Naive thymus-derived CD4-positive, alpha-beta T cell (primary cell): ENCODE measurements at regions of chr14 and their contacts with region 1.

Region 1: GRCh38 chr14:22918804-22919600 is at the start of gene RBM23:
- DNase-seq: peak; percentile 98 to 100 (median 100)
- ATAC-seq: peak; percentile 92
- H3K4me3 ChIP-seq: peak within 1 kb of the TSS; percentile 96
- H3K4me3 Mint-ChIP-seq: peak within 1 kb of the TSS; percentile 93 to 100 (median 97)
- H3K27ac ChIP-seq: peak within 1 kb of the TSS; percentile 98
- H3K27ac Mint-ChIP-seq: peak within 1 kb of the TSS; percentile 100
- H3K4me1 ChIP-seq: peaks cover 0 to 19% of the 10 kb centered on the region in 2 donors
- H3K4me1 Mint-ChIP-seq: peaks cover 18 to 56% (median 49%) of the 10 kb centered on the region in 7 donors
- H3K27me3 ChIP-seq: no peaks in the 10 kb centered on the region
- H3K27me3 Mint-ChIP-seq: peaks cover 0 to 4% (median 0%) of the 10 kb centered on the region in 5 donors
- total RNA-seq, gene RBM23: 91.9 to 140 (median 99.1) TPM

Region 2: DNA sequence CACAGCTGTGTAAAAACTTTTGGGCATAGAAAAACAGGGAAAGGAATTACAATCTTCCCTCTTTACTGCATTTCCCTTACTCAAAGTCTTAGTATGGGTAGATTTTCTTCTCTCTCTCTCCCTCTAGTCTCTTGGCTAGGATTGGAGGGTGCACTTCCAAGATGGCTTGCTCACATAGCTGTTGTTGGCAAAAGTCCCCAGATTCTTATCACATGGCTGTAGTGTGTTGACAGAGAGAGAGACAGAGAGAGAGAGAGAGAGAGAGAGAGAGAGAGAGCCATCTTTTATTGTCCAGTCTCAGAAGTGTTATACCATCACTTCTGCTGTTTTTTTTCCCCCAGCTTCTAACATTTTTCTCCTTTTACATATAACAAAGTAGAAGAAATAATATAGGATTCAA is 1271.6 kb before region 1 on chr14:
- CTCF ChIA-PET with region 1: no interaction called
- POLR2A ChIA-PET with region 1: no interaction called
- intact Hi-C with region 1: no loop called
- DNase-seq: no peak
- ATAC-seq: no peak
- H3K4me3 ChIP-seq: no peak overlapping the region
- H3K4me3 Mint-ChIP-seq: no peak overlapping the region
- H3K27ac ChIP-seq: no peak overlapping the region
- H3K27ac Mint-ChIP-seq: no peak overlapping the region
- H3K4me1 ChIP-seq: no peaks in the 10 kb centered on the region
- H3K4me1 Mint-ChIP-seq: peaks cover 0 to 4% (median 0%) of the 10 kb centered on the region in 7 donors
- H3K27me3 ChIP-seq: no peaks in the 10 kb centered on the region
- H3K27me3 Mint-ChIP-seq: peaks cover 8 to 30% (median 23%) of the 10 kb centered on the region in 5 donors

Region 3: DNA sequence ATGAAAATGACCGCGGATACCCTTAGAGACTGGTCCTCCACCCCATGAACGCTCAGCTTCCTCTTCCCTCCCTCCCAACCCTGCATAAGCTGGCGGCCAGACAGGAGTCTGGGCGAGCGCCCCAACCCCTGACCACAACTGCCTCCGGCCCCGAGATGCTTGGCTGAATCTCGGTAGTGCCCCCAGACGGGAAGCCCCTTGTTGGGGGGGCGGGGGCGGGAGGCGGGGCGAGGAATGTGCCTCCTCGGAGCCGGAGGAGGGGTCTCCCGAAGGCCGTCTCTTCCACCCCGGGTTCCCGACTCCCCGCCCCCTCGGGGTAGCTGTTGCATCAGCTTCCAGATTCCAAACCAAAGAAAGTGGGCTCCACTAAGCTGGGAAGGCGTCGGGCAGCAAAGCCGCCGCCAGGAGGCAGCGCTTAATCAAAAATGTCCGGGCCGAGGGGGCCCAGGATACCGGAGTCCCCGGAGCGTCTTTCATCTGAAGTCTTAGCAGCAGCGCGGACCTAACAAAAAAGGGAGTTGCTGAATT is 96.4 kb before region 1 on chr14:
- CTCF ChIA-PET with region 1: interaction called, 27 read pairs
- POLR2A ChIA-PET with region 1: no interaction called
- intact Hi-C with region 1: no loop called
- DNase-seq: peak; percentile 50 to 71 (median 65)
- ATAC-seq: peak; percentile 83
- H3K4me3 ChIP-seq: peak overlapping the region; percentile 38
- H3K4me3 Mint-ChIP-seq: peak overlapping the region; percentile 47 to 78 (median 66)
- H3K27ac ChIP-seq: no peak overlapping the region
- H3K27ac Mint-ChIP-seq: peak overlapping the region in 3 of 9 donors; percentile 11 to 36 (median 22)
- H3K4me1 ChIP-seq: peaks cover 0 to 17% of the 10 kb centered on the region in 2 donors
- H3K4me1 Mint-ChIP-seq: peaks cover 6 to 37% (median 24%) of the 10 kb centered on the region in 7 donors
- H3K27me3 ChIP-seq: no peaks in the 10 kb centered on the region
- H3K27me3 Mint-ChIP-seq: peaks cover 0 to 16% (median 4%) of the 10 kb centered on the region in 5 donors

Region 4: DNA sequence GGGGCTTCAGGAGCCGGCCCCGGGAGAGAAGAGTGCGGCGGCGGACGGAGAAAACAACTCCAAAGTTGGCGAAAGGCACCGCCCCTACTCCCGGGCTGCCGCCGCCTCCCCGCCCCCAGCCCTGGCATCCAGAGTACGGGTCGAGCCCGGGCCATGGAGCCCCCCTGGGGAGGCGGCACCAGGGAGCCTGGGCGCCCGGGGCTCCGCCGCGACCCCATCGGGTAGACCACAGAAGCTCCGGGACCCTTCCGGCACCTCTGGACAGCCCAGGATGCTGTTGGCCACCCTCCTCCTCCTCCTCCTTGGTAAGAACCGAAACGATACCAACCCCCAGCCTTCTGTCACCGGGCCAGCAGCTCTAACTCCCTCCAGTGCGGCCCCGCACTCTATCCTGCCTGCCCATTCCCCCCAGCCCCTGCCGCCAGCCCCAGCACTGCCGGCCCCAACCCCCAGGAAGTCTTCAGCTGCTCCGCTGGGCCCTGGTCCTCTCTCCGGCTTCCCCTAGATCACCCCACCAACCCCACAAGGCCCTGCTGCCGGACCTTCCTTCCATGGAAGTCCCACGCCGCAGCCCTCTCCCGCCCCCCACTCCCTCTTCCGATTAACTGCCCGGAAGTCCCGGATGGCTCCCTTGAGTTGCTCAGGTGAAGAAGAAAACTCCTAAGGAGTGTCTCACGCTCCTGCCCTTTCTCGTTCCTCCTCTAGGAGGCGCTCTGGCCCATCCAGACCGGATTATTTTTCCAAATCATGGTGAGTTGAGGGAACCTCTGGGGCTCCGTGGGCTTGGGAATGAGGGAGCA is 46.8 kb before region 1 on chr14:
- CTCF ChIA-PET with region 1: interaction called, 4 read pairs
- POLR2A ChIA-PET with region 1: interaction called, 29 read pairs
- intact Hi-C with region 1: loop called (anchors 1 kb)
- DNase-seq: peak; percentile 55 to 76 (median 69)
- ATAC-seq: peak; percentile 57
- H3K4me3 ChIP-seq: peak overlapping the region; percentile 72
- H3K4me3 Mint-ChIP-seq: peak overlapping the region; percentile 87 to 98 (median 95)
- H3K27ac ChIP-seq: peak overlapping the region; percentile 86
- H3K27ac Mint-ChIP-seq: peak overlapping the region; percentile 83 to 98 (median 94)
- H3K4me1 ChIP-seq: peaks cover 20 to 33% of the 10 kb centered on the region in 2 donors
- H3K4me1 Mint-ChIP-seq: peaks cover 26 to 49% (median 29%) of the 10 kb centered on the region in 7 donors
- H3K27me3 ChIP-seq: no peaks in the 10 kb centered on the region
- H3K27me3 Mint-ChIP-seq: no peaks in the 10 kb centered on the region

Region 5: DNA sequence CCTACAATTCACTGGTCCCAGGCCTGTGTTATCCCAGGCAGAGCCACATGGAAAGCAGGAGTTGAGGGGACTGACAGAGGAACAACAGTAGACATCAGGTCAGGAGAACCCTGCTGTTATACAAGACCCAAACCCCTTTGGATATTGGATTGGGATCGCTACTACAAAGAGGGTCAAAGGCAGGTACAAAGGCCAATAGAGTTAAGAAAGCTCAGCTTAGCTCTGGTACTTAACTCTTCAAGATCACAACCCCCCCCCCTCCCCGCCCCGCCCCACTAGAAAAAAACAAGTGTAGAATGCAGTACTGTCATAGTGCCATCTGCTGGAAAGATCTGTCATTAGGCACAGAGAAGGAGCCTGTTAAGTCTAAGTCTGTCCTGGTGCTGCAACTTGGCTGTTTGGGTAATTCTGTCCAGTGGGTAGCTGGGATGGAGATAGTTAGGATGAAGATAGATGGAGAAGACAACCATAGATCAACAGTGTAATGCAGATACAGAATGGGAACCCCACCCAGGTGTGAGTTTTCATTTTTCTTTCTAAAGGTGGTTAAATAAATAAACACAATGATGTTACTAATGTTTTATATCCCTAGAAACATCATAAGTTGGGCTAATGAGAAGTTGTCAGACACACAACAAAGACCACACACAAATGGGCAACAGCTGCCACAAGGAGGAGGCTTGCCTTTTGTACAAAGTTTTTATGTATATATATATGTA is 18.8 kb before region 1 on chr14:
- CTCF ChIA-PET with region 1: interaction called, 8 read pairs
- POLR2A ChIA-PET with region 1: interaction called, 6 read pairs
- intact Hi-C with region 1: loop called in 1 of 2 experiments (anchors 1 kb)
- DNase-seq: peak in 7 of 9 donors; percentile 41 to 72 (median 66)
- ATAC-seq: peak; percentile 94
- H3K4me3 ChIP-seq: no peak overlapping the region
- H3K4me3 Mint-ChIP-seq: no peak overlapping the region
- H3K27ac ChIP-seq: peak overlapping the region; percentile 15
- H3K27ac Mint-ChIP-seq: peak overlapping the region in 8 of 9 donors; percentile 0 to 58 (median 35)
- H3K4me1 ChIP-seq: peaks cover 0 to 4% of the 10 kb centered on the region in 2 donors
- H3K4me1 Mint-ChIP-seq: peaks cover 10 to 24% (median 15%) of the 10 kb centered on the region in 7 donors
- H3K27me3 ChIP-seq: no peaks in the 10 kb centered on the region
- H3K27me3 Mint-ChIP-seq: no peaks in the 10 kb centered on the region

Region 6: DNA sequence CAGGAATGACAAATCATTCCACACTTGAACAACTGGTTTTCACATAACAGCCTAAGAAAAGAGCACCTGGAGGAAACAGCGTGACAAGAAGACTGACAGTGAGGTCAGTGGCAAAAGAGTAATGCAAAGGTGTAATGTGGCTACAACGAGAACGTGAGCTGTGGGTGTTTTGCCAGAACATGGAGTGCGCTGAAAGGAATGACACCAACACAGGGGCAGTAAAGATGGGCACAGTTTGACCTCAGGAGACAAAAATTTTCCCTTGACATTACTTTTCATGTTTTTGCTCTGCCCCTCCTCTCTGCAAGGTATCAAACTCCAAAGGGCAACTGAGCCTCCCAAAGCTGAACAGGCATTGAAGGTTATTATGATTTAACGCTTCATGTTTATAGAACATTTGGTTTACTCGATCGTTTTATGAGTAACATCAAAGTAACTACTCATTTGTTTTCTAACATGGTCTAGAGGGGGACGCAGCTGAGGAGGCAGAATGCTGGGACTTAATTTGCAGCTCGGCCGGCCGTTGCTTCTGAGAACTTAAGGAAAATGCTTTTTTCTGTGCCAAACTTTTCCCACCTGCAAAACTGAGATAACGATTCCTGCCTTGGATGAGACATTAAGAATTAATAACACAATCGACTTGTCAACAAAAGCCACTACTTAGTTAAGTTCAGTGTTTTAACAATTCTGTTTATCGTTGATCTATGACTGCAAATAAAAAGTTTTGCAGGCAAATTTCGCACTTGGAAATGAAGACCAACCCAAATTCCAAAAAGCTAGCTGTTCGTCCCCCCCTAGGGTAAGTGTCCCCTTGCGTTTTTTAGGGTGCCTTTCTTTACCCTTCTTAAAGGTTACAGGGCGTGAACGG is 36.9 kb after region 1 on chr14:
- CTCF ChIA-PET with region 1: no interaction called
- POLR2A ChIA-PET with region 1: interaction called, 13 read pairs
- intact Hi-C with region 1: loop called (anchors 1 kb)
- DNase-seq: no peak
- ATAC-seq: no peak
- H3K4me3 ChIP-seq: peak overlapping the region; percentile 64
- H3K4me3 Mint-ChIP-seq: peak overlapping the region; percentile 87 to 95 (median 93)
- H3K27ac ChIP-seq: peak overlapping the region; percentile 85
- H3K27ac Mint-ChIP-seq: peak overlapping the region; percentile 88 to 96 (median 92)
- H3K4me1 ChIP-seq: peaks cover 0 to 6% of the 10 kb centered on the region in 2 donors
- H3K4me1 Mint-ChIP-seq: peaks cover 0 to 31% (median 19%) of the 10 kb centered on the region in 7 donors
- H3K27me3 ChIP-seq: no peaks in the 10 kb centered on the region
- H3K27me3 Mint-ChIP-seq: peaks cover 0 to 4% (median 0%) of the 10 kb centered on the region in 5 donors

Region 7: DNA sequence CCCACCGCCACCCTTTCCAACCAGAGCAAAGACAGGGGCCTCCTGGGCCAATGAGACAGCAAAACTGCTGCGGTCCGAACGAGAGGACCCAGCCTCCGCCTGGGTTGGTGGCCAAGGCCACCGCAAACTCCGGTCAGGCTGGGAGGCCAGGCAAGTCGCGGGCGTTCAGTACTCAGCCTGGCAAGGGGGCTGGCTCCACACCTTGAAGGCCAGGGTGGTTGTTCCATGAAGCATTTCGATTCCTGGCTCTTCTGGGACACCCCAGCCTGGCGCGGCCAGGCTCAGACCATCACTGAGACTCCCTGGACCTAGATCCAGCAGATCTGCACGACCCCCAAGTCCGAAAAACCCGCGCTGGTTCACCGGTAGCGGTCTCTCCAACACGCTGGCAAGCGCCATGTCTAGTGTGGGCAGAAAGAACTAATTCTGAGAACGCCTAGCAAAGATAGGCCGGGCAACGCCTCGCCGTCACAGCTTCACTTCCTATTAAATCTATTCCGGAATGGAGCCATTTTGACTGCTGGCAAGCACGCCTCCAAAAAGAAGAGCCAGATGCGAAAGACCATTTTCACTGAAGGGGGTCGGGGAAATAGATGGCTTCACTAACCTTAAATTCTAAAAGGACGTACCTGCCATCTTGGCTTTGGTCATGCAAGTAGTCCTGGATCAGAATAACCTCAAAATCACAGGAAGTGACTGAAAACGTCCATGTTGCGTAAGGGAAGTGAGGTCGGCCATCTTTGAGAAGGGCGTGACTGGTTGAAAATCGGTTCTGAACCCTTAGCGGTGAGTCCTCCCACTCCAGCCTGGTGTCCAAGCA is 115.7 kb after region 1 on chr14 and contains the start of gene PSMB5:
- CTCF ChIA-PET with region 1: no interaction called
- POLR2A ChIA-PET with region 1: no interaction called
- intact Hi-C with region 1: loop called (anchors 1 to 2 kb)
- DNase-seq: peak; percentile 63 to 94 (median 91)
- ATAC-seq: peak; percentile 95
- H3K4me3 ChIP-seq: peak within 1 kb of the TSS; percentile 79
- H3K4me3 Mint-ChIP-seq: peak within 1 kb of the TSS; percentile 87 to 96 (median 92)
- H3K27ac ChIP-seq: peak within 1 kb of the TSS; percentile 83
- H3K27ac Mint-ChIP-seq: peak within 1 kb of the TSS; percentile 93 to 99 (median 96)
- H3K4me1 ChIP-seq: peaks cover 9 to 17% of the 10 kb centered on the region in 2 donors
- H3K4me1 Mint-ChIP-seq: peaks cover 22 to 43% (median 29%) of the 10 kb centered on the region in 7 donors
- H3K27me3 ChIP-seq: no peaks in the 10 kb centered on the region
- H3K27me3 Mint-ChIP-seq: no peaks in the 10 kb centered on the region
- total RNA-seq, gene PSMB5: 19.2 to 69.1 (median 32.8) TPM

Region 8: DNA sequence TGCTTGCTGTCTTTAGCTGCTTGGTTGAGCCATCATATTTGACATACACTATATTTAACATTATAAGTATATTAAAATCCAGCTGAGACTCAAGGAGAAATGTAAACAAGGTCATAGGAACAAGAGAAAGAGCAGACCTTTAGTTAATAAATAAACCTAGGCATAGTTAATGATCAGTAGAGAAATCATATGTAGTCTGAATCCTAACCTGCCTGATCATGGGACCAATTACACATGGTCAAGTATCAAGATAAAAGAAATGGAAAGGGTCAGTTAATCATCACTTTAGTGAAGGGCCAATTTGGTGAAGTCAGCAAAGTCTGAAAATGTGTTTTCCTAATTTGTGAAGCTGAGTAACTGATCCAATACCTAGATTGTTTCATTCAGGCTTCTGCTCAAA is 326.3 kb after region 1 on chr14:
- CTCF ChIA-PET with region 1: no interaction called
- POLR2A ChIA-PET with region 1: no interaction called
- intact Hi-C with region 1: no loop called
- DNase-seq: no peak
- ATAC-seq: no peak
- H3K4me3 ChIP-seq: no peak overlapping the region
- H3K4me3 Mint-ChIP-seq: no peak overlapping the region
- H3K27ac ChIP-seq: no peak overlapping the region
- H3K27ac Mint-ChIP-seq: no peak overlapping the region
- H3K4me1 ChIP-seq: no peaks in the 10 kb centered on the region
- H3K4me1 Mint-ChIP-seq: no peaks in the 10 kb centered on the region
- H3K27me3 ChIP-seq: peaks cover 0 to 4% of the 10 kb centered on the region in 2 donors
- H3K27me3 Mint-ChIP-seq: peaks cover 9 to 30% (median 10%) of the 10 kb centered on the region in 5 donors